ENCODE measurements at regions of chr17 and their contacts with region 1.

Region 1: DNA sequence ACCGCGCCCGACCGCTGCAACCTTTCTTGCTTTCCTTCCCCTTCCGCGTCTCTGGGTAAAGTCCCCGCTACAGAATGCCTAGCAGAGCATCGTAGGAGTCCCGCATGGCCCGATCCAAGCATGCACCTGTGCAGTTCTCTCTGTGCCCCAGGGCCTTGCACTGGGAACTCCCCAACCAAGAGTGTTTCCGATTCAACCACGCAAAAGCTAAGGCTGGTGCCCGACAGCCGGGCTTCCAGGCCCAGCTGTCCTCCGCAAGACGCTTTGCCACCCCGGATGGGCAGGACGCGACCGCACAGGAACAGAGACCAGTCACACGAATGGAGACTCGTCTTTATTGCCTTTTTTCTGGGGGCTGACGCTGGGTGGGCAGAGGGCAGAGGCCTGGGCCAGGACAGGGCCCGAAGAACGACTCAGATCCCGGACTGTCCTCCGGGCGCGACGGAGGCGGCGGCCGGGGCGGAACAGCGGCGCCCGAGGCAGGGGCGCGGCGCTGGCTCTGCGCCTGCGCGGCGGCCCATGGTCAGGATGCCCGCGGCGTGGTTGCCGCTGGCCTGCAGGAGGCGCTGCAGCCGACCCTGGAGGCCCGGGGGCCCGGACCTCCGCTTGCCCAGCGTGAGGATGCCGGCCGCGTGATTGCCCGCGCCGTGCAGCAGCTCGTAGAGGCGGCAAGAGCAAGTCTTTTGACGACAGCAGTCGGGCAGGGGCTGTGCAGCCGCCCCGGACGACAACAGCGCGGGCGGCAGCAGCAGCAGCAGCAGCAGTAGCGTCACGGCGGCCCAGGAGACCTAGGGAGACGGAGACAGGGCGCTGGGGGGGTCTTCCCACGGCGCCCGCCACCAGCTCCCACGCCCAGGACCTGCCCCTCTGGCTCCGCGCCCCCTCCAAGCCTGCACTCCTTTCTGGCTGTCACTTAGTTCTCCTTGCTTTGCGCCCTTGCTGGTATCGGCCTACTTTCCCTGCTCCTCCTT is 1.2 kb downstream of the HCRT start:
- DNase-seq: peak; percentile 54 to 92 (median 72)
- ATAC-seq: peak; percentile 78
- H3K4me3 ChIP-seq: peak overlapping the region; percentile 98
- H3K4me3 Mint-ChIP-seq: peak overlapping the region; percentile 85 to 95 (median 90)
- H3K27ac ChIP-seq: peak overlapping the region; percentile 81
- H3K27ac Mint-ChIP-seq: peak overlapping the region; percentile 69 to 94 (median 88)
- H3K4me1 ChIP-seq: peaks cover 15 to 38% of the 10 kb centered on the region in 2 donors
- H3K4me1 Mint-ChIP-seq: peaks cover 21 to 52% (median 41%) of the 10 kb centered on the region in 7 donors
- H3K27me3 ChIP-seq: no peaks in the 10 kb centered on the region
- H3K27me3 Mint-ChIP-seq: peaks cover 0 to 25% (median 8%) of the 10 kb centered on the region in 5 donors

Region 2: GRCh38 chr17:41885733-41886132 is 298.3 kb before region 1 on chr17:
- CTCF ChIA-PET with region 1: no interaction called
- POLR2A ChIA-PET with region 1: no interaction called
- intact Hi-C with region 1: no loop called
- DNase-seq: no peak
- ATAC-seq: no peak
- H3K4me3 ChIP-seq: no peak overlapping the region
- H3K4me3 Mint-ChIP-seq: no peak overlapping the region
- H3K27ac ChIP-seq: no peak overlapping the region
- H3K27ac Mint-ChIP-seq: peak overlapping the region in 2 of 9 donors; percentile 51
- H3K4me1 ChIP-seq: no peaks in the 10 kb centered on the region
- H3K4me1 Mint-ChIP-seq: peaks cover 0 to 4% (median 0%) of the 10 kb centered on the region in 7 donors
- H3K27me3 ChIP-seq: no peaks in the 10 kb centered on the region
- H3K27me3 Mint-ChIP-seq: no peaks in the 10 kb centered on the region

Region 3: GRCh38 chr17:41966463-41967140 is 217.4 kb before region 1 on chr17 and contains the start of gene CNP:
- CTCF ChIA-PET with region 1: no interaction called
- POLR2A ChIA-PET with region 1: interaction called, 5 read pairs
- intact Hi-C with region 1: loop called in 1 of 2 experiments (anchors 1 kb)
- DNase-seq: peak; percentile 84 to 94 (median 88)
- ATAC-seq: peak; percentile 94
- H3K4me3 ChIP-seq: peak within 1 kb of the TSS; percentile 87
- H3K4me3 Mint-ChIP-seq: peak within 1 kb of the TSS; percentile 78 to 93 (median 88)
- H3K27ac ChIP-seq: peak within 1 kb of the TSS; percentile 88
- H3K27ac Mint-ChIP-seq: peak within 1 kb of the TSS; percentile 83 to 96 (median 89)
- H3K4me1 ChIP-seq: peaks cover 10 to 16% of the 10 kb centered on the region in 2 donors
- H3K4me1 Mint-ChIP-seq: peaks cover 24 to 51% (median 36%) of the 10 kb centered on the region in 7 donors
- H3K27me3 ChIP-seq: no peaks in the 10 kb centered on the region
- H3K27me3 Mint-ChIP-seq: peaks cover 0 to 2% (median 0%) of the 10 kb centered on the region in 5 donors
- total RNA-seq, gene CNP: 29.6 to 86.3 (median 32.5) TPM

Region 4: GRCh38 chr17:42112552-42113176 is 71.4 kb before region 1 on chr17 and contains the start of gene DHX58:
- CTCF ChIA-PET with region 1: interaction called, 5 read pairs
- POLR2A ChIA-PET with region 1: interaction called, 3 read pairs
- intact Hi-C with region 1: loop called (anchors 2 to 5 kb)
- DNase-seq: peak; percentile 47 to 86 (median 81)
- ATAC-seq: peak; percentile 85
- H3K4me3 ChIP-seq: peak within 1 kb of the TSS; percentile 83
- H3K4me3 Mint-ChIP-seq: peak within 1 kb of the TSS; percentile 86 to 96 (median 94)
- H3K27ac ChIP-seq: peak within 1 kb of the TSS; percentile 83
- H3K27ac Mint-ChIP-seq: peak within 1 kb of the TSS; percentile 94 to 100 (median 97)
- H3K4me1 ChIP-seq: peaks cover 12 to 34% of the 10 kb centered on the region in 2 donors
- H3K4me1 Mint-ChIP-seq: peaks cover 22 to 60% (median 48%) of the 10 kb centered on the region in 7 donors
- H3K27me3 ChIP-seq: no peaks in the 10 kb centered on the region
- H3K27me3 Mint-ChIP-seq: no peaks in the 10 kb centered on the region
- total RNA-seq, gene DHX58: 36.0 to 80.5 (median 53.5) TPM

Region 5: DNA sequence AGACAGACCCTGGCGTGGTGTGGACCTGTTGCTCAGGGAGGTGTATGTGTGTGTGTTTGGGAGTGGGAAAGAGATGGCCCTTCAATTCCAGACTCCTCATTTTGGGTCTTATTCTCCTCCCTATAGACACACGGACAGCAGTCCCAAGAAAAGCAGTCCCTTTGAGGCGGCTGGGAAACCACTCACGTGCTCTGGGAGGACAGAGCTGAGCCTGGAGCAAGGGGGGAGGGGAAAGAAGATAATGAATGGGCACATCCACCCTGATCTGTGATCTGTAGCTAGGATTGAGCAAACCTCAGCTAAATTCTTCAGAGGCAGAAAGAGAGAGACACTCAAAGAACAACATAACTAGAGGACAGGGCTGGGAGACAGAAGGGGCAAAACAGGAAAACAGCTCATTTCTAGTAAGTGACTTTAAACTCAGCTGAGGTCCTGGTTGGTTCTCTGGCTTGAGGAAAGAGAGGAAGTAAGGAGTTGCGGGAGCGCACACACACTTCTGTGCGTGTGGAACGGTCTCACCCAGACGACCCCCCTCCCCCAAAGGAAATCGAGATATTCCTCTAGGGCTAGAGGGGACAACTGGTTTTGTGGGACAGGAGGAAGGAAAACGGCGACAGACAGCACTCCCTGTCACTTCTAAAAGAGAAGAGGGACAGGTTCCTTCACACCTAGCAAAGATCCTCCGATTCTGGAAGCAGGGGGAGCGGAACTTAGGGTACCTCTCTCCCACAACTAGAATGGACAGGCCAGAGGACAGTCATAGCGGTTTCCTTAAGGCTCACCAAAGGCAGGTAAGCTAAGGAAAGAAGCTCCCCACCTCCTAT is 29.9 kb before region 1 on chr17:
- CTCF ChIA-PET with region 1: no interaction called
- POLR2A ChIA-PET with region 1: interaction called, 7 read pairs
- intact Hi-C with region 1: loop called (anchors 1 kb)
- DNase-seq: no peak
- ATAC-seq: no peak
- H3K4me3 ChIP-seq: peak overlapping the region; percentile 76
- H3K4me3 Mint-ChIP-seq: peak overlapping the region; percentile 81 to 97 (median 94)
- H3K27ac ChIP-seq: peak overlapping the region; percentile 94
- H3K27ac Mint-ChIP-seq: peak overlapping the region; percentile 79 to 96 (median 93)
- H3K4me1 ChIP-seq: peaks cover 10 to 16% of the 10 kb centered on the region in 2 donors
- H3K4me1 Mint-ChIP-seq: peaks cover 21 to 43% (median 37%) of the 10 kb centered on the region in 7 donors
- H3K27me3 ChIP-seq: no peaks in the 10 kb centered on the region
- H3K27me3 Mint-ChIP-seq: no peaks in the 10 kb centered on the region

Region 6: GRCh38 chr17:42248351-42249179 is 64.5 kb after region 1 on chr17:
- CTCF ChIA-PET with region 1: no interaction called
- POLR2A ChIA-PET with region 1: interaction called, 12 read pairs
- intact Hi-C with region 1: no loop called
- DNase-seq: peak; percentile 47 to 95 (median 90)
- ATAC-seq: peak; percentile 93
- H3K4me3 ChIP-seq: peak overlapping the region; percentile 66
- H3K4me3 Mint-ChIP-seq: peak overlapping the region; percentile 83 to 99 (median 90)
- H3K27ac ChIP-seq: peak overlapping the region; percentile 97
- H3K27ac Mint-ChIP-seq: peak overlapping the region; percentile 97 to 99 (median 99)
- H3K4me1 ChIP-seq: peaks cover 43 to 52% of the 10 kb centered on the region in 2 donors
- H3K4me1 Mint-ChIP-seq: peaks cover 50 to 83% (median 74%) of the 10 kb centered on the region in 7 donors
- H3K27me3 ChIP-seq: no peaks in the 10 kb centered on the region
- H3K27me3 Mint-ChIP-seq: no peaks in the 10 kb centered on the region

Region 7: GRCh38 chr17:42459256-42459800 is 275.3 kb after region 1 on chr17:
- CTCF ChIA-PET with region 1: no interaction called
- POLR2A ChIA-PET with region 1: no interaction called
- intact Hi-C with region 1: loop called in 1 of 2 experiments (anchors 5 kb)
- DNase-seq: peak in 6 of 9 donors; percentile 10 to 27 (median 16)
- ATAC-seq: no peak
- H3K4me3 ChIP-seq: peak overlapping the region; percentile 86
- H3K4me3 Mint-ChIP-seq: peak overlapping the region; percentile 88 to 97 (median 92)
- H3K27ac ChIP-seq: peak overlapping the region; percentile 66
- H3K27ac Mint-ChIP-seq: peak overlapping the region; percentile 68 to 95 (median 92)
- H3K4me1 ChIP-seq: peaks cover 36 to 39% of the 10 kb centered on the region in 2 donors
- H3K4me1 Mint-ChIP-seq: peaks cover 24 to 47% (median 40%) of the 10 kb centered on the region in 7 donors
- H3K27me3 ChIP-seq: no peaks in the 10 kb centered on the region
- H3K27me3 Mint-ChIP-seq: peaks cover 0 to 20% (median 0%) of the 10 kb centered on the region in 5 donors